GM10248 (cell line): ENCODE measurements at regions of chr19 and their contacts with region 1.

Region 1: DNA sequence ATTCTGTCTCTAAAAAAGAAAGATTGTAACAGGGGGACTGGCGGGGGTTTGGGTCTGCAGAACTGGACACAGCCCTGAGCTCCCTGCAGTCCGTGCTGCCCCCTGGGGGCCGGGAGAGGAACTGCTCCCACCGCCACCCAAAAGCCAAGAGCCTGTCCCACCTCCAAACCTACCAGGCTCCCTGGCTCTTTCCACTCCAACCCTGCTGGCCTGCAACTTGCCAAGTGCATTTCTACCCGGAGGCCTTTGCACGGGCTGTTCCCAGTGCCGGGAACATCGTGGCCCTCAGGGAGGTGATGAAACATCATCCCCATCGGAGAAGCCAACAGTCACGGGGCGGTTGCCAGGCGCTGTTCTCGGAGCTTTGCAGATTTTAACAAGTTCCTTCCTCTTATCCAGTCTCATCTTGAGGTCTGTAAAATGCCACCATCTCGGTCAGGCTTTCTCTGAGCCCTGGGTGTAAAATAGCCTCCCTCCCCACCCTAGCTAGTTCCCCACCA is 50.7 kb downstream of the SMIM24 start:
- DNase-seq: peak; percentile 89
- CTCF ChIP-seq: peak; percentile 96

Region 2: GRCh38 chr19:3163230-3163886 is 266.3 kb before region 1 on chr19:
- CTCF ChIA-PET with region 1: no interaction called
- POLR2A ChIA-PET with region 1: no interaction called
- DNase-seq: peak; percentile 90
- CTCF ChIP-seq: peak; percentile 93

Region 3: DNA sequence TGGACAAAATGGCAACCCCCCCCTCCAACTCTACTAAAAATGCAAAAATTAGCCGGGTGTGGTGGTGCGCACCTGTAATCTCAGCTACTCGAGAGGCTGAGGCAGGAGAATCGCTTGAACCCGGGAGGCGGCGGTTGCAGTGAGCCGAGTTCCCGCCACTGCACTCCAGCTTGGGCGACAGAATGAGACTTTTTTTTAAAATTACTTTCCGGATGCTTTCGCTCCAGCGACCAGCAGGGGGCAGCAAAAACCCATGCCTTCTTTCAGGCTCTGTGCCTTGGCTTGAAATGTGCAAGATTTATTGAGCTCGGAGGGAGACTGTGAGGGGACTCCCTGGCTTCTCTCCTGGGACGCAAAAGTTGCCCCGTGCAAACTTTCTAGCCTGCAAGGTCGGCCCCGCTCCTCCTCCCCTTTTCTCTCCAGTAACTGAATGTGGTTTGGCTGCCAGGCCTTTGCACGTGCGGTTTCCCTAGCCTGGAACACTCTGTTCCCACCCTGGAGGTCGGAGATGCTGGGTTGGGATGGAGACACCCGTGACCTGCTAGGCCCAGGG is 124.7 kb before region 1 on chr19:
- CTCF ChIA-PET with region 1: interaction called, 24 read pairs
- POLR2A ChIA-PET with region 1: no interaction called
- DNase-seq: peak; percentile 83
- CTCF ChIP-seq: peak; percentile 85

Region 4: GRCh38 chr19:3343619-3344502 is 85.8 kb before region 1 on chr19:
- CTCF ChIA-PET with region 1: interaction called, 19 read pairs
- POLR2A ChIA-PET with region 1: no interaction called
- DNase-seq: peak; percentile 64
- CTCF ChIP-seq: peak; percentile 8

Region 5: GRCh38 chr19:3375221-3376090 is 54.2 kb before region 1 on chr19:
- CTCF ChIA-PET with region 1: interaction called, 17 read pairs
- POLR2A ChIA-PET with region 1: no interaction called
- DNase-seq: no peak
- CTCF ChIP-seq: no peak

Region 6: DNA sequence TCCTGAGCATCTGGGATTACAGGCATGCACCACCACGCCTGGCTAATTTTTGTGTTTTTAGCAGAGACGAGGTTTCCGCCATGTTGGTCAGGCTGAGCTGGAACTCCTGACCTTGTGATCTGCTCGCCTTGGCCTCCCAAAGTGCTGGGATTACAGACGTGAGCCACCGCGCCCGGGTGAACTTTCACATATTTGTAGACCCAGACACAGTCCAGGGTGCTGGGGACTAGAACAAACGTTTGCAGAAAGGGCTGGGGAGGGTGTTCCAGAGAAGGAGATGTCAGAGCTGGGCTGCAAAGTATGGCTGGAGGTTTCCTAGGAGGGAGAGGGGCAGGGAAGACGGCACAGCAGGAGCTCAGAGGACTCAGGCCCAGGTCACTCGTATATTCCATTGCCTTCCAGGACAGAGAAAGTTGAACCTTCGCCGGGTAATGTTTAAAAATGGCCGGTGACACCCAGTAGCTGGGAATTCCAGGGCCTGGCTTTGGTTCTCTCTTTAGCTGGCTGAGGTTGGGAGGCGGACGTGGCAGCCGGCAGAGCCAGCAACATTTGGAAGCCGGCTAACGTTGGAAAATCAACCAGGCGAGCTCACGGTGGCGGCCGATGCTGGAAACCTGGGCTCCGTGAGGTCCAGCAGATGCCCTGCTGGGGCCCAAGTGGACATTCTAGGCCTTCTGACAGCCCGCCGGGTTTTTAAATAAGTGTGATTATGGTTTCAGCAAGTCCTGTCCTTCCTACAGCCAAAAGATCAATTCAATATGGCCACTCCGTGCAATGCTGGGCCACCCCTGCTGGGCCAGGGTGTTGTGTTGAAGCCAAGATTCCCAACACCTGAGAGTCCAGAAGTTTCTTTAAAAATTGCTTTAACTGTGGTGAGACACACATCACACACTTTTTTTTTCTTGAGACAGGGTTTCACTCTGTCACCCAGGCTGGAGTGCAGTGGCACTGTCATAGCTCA is 21.8 kb before region 1 on chr19:
- CTCF ChIA-PET with region 1: interaction called, 34 read pairs
- POLR2A ChIA-PET with region 1: no interaction called
- DNase-seq: no peak
- CTCF ChIP-seq: no peak

Region 7: DNA sequence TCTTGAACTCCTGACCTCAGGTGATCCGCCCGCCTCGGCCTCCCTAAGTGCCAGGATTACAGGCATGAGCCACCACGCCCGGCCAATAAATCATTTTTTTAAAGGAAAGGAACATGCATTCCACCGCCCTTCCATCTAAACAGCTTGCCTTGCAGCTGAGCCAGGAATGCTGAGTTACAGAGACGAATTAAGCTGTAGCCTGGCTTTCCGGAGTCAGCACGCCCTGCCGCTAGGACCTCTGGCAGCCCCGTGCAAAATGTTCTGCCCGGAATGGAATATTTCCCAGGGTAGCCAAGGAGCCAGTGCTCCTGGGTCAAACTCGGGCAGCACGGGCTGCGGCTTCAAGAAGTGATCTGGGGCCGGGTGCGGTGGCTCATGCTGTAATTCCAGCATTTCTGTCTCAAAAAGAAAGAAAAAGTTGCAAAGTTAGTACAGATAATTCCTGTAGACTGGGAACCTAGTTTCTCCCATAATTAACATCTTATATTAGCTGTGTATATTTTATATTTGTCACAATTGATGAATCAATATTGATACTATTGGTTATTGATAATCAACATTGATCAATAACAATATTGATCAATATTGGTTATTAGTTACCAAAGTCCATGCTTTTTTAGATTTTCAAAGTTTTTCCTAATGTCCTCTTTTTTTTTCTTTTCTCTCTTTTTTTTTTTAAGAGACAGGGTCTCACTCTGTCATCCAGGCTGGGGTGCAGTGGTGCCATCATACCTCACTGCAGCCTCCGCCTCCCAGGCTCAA is 470.1 kb after region 1 on chr19:
- CTCF ChIA-PET with region 1: no interaction called
- POLR2A ChIA-PET with region 1: no interaction called
- DNase-seq: no peak
- CTCF ChIP-seq: no peak